ENCODE measurements at regions of chr4 and their contacts with region 1.

Region 1: GRCh38 chr4:25710637-25711036 is 55.0 kb downstream of the SLC34A2 start:
- DNase-seq: no peak
- ATAC-seq: no peak
- H3K4me3 ChIP-seq: no peak overlapping the region
- H3K27ac ChIP-seq: no peak overlapping the region
- H3K4me1 ChIP-seq: no peaks in the 10 kb centered on the region
- H3K27me3 ChIP-seq: no peaks in the 10 kb centered on the region
- CTCF ChIP-seq: no peak

Region 2: GRCh38 chr4:25638806-25639205 is 71.8 kb before region 1 on chr4:
- CTCF ChIA-PET with region 1: interaction called, 12 read pairs
- POLR2A ChIA-PET with region 1: no interaction called
- in situ Hi-C with region 1: no loop called
- intact Hi-C with region 1: no loop called
- DNase-seq: no peak
- ATAC-seq: no peak
- H3K4me3 ChIP-seq: no peak overlapping the region
- H3K27ac ChIP-seq: no peak overlapping the region
- H3K4me1 ChIP-seq: no peaks in the 10 kb centered on the region
- H3K27me3 ChIP-seq: no peaks in the 10 kb centered on the region
- CTCF ChIP-seq: no peak

Region 3: DNA sequence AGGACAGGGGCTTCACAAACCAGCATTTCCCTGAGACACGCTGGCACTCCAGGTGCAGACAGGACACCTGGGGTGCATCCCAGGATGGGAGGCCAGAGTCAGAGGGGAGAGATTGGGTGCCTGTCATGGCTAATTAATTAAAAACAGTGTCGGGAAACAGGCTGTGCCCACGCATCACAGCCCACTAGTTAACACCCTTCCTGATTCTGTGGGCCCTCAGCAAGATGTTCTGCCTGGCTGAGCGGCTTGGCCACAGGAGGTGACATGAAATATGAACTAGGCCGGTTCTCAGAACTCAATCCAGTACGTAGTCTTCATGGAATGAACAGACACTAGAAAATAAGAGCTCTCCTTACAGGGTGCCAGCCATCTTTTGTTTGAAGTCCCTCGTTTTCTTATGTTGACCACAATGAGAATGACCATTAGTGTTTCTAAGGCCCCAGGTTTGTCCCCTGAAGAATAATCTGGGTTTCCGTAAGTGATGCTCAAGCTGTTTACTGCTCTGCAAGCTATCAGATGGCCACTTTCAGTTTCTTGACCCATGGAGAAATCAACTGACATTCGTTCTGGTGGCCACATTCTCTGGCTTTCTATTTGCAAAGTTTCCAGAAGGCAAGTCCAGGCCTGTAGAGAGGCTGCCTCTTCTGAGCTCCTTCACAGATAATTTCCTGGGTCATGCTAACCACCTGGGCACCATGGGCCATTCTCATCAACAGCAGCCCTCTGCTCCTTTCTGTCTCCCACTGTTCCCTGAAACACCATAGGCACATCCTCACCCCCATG is 17.3 kb after region 1 on chr4:
- CTCF ChIA-PET with region 1: no interaction called
- POLR2A ChIA-PET with region 1: no interaction called
- in situ Hi-C with region 1: no loop called
- intact Hi-C with region 1: no loop called
- DNase-seq: no peak
- ATAC-seq: no peak
- H3K4me3 ChIP-seq: no peak overlapping the region
- H3K27ac ChIP-seq: no peak overlapping the region
- H3K4me1 ChIP-seq: no peaks in the 10 kb centered on the region
- H3K27me3 ChIP-seq: no peaks in the 10 kb centered on the region
- CTCF ChIP-seq: no peak